ENCODE measurements at regions of chr22 and their contacts with region 1.

Region 1: GRCh38 chr22:48456449-48456848 is 1371.2 kb downstream of the BRD1 start:
- DNase-seq: peak in 1 of 2 donors; percentile 14
- ATAC-seq: peak; percentile 93 to 96
- H3K4me3 ChIP-seq: no peak overlapping the region
- H3K27ac ChIP-seq: peak overlapping the region in 3 of 4 donors; percentile 59 to 75 (median 60)
- H3K4me1 ChIP-seq: peaks cover 0 to 11% of the 10 kb centered on the region in 2 donors
- H3K27me3 ChIP-seq: no peaks in the 10 kb centered on the region
- CTCF ChIP-seq: no peak
- POLR2A ChIP-seq: peak; percentile 22 to 42

Region 2: DNA sequence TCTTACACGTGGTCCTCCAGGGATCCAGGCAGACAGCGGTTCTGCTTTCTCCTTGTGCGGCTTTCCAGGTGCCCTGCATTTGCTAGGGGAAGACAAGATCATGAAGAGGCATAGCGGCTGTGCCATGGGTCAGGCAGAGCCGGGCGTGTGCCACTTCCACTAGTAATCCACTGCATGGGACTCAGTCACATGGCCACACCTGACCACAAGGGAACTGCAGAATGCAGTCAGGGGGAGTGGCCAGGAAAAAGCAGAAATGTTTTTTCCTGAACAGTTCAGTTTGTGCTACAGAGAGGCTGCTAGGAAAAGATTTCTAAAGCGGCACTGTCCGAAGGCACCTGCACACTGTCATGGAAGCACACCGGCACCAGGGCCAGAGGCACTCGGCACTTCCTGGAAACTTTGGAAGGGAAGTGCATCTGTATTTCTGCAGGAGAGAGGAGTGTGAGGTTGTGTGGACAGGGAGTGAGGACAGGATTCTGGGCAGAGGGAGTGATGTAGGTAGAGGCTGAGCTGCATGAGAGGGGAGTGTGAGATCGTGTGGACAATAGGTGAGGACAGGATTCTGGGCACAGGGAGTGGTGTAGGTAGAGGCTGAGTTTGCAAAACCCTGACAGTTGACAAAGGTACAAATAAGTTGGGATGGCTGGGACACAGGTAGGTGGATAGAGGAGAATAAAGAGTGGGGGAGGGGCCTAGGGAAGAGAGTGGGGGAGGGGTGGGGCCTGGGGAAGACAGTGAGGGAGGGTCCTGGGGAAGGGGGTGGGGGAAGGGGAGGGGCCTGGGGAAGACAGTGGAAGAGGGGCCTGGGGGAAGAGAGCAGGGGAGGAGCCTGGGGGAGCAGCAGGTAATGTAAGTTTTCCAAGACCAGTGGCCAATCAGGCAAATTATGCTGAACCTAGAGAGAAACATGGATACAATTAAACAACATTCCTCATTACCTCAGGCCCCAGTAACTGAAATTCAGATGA is 257.7 kb before region 1 on chr22:
- in situ Hi-C with region 1: no loop called
- intact Hi-C with region 1: no loop called
- DNase-seq: no peak
- ATAC-seq: no peak
- H3K4me3 ChIP-seq: no peak overlapping the region
- H3K27ac ChIP-seq: no peak overlapping the region
- H3K4me1 ChIP-seq: no peaks in the 10 kb centered on the region
- H3K27me3 ChIP-seq: peaks cover 0 to 2% (median 0%) of the 10 kb centered on the region in 3 donors
- CTCF ChIP-seq: no peak
- POLR2A ChIP-seq: no peak

Region 3: GRCh38 chr22:48517039-48518030 is 60.9 kb after region 1 on chr22:
- in situ Hi-C with region 1: no loop called
- intact Hi-C with region 1: loop called (anchors 10 kb)
- DNase-seq: no peak
- ATAC-seq: no peak
- H3K4me3 ChIP-seq: no peak overlapping the region
- H3K27ac ChIP-seq: no peak overlapping the region
- H3K4me1 ChIP-seq: no peaks in the 10 kb centered on the region
- H3K27me3 ChIP-seq: no peaks in the 10 kb centered on the region
- CTCF ChIP-seq: no peak
- POLR2A ChIP-seq: no peak

Region 4: DNA sequence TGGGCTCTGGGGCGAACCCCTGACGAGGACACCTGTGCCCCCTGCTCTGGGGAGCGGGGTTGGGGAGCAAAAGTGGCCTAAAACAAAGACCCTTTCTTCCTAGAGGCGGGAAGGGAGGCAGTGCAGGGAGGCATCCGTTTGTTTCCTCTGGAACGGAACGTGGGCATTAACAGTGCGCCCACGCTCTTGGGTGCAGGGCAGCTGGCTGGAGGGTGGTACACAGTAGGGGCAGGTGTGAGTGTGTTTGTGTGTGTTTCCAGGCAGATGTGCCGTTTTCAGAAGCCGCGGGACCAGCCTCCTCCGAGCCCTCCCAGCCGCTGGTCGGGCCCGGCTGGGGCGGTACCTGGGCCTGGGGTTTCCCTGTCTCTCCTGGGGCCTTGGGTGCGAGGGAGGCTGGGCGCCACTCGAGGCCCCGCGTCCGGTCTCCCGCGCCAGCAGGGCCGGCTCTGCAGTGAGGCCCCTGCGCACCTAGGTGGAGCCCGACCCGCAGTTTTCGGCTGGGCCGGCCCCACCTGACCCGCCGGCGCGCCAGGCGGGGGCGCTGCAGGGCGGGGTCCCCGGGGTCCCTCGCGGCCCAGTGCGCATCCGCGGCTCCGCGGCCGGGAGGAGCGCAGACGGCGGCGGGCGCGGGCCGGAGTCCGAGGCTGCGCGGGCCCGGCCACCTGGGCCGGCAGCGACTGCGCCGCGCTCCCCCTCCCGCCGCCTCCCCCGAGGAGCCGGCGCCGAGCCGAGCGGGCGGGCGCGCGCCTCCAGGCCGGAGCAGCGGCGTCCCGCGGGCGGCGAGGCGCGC is 118.5 kb after region 1 on chr22:
- in situ Hi-C with region 1: loop called in 1 of 4 experiments (anchors 25 kb)
- intact Hi-C with region 1: no loop called
- DNase-seq: no peak
- ATAC-seq: no peak
- H3K4me3 ChIP-seq: no peak overlapping the region
- H3K27ac ChIP-seq: no peak overlapping the region
- H3K4me1 ChIP-seq: no peaks in the 10 kb centered on the region
- H3K27me3 ChIP-seq: peaks cover 13 to 23% (median 16%) of the 10 kb centered on the region in 3 donors
- CTCF ChIP-seq: no peak
- POLR2A ChIP-seq: no peak